ENCODE measurements at regions of chr20 and their contacts with region 1.

Region 1: GRCh38 chr20:54668271-54669039 is 193.1 kb downstream of the DOK5 start:
- DNase-seq: peak in 6 of 9 experiments; percentile 2 to 40 (median 16)
- ATAC-seq: no peak
- H3K4me3 ChIP-seq: no peak overlapping the region
- H3K4me3 Mint-ChIP-seq: no peak overlapping the region
- H3K27ac ChIP-seq: no peak overlapping the region
- H3K27ac Mint-ChIP-seq: no peak overlapping the region
- H3K4me1 ChIP-seq: no peaks in the 10 kb centered on the region
- H3K4me1 Mint-ChIP-seq: peaks cover 2% of the 10 kb centered on the region
- H3K27me3 ChIP-seq: no peaks in the 10 kb centered on the region
- H3K27me3 Mint-ChIP-seq: peaks cover 18% of the 10 kb centered on the region
- CTCF ChIP-seq: peak; percentile 47

Region 2: GRCh38 chr20:54619181-54619580 is 49.3 kb before region 1 on chr20:
- CTCF ChIA-PET with region 1: no interaction called
- POLR2A ChIA-PET with region 1: no interaction called
- intact Hi-C with region 1: no loop called
- DNase-seq: no peak
- ATAC-seq: no peak
- H3K4me3 ChIP-seq: no peak overlapping the region
- H3K4me3 Mint-ChIP-seq: no peak overlapping the region
- H3K27ac ChIP-seq: no peak overlapping the region
- H3K27ac Mint-ChIP-seq: no peak overlapping the region
- H3K4me1 ChIP-seq: no peaks in the 10 kb centered on the region
- H3K4me1 Mint-ChIP-seq: no peaks in the 10 kb centered on the region
- H3K27me3 ChIP-seq: no peaks in the 10 kb centered on the region
- H3K27me3 Mint-ChIP-seq: peaks cover 3% of the 10 kb centered on the region
- CTCF ChIP-seq: no peak

Region 3: GRCh38 chr20:55229451-55229850 is 561.0 kb after region 1 on chr20:
- CTCF ChIA-PET with region 1: no interaction called
- POLR2A ChIA-PET with region 1: no interaction called
- intact Hi-C with region 1: no loop called
- DNase-seq: no peak
- ATAC-seq: no peak
- H3K4me3 ChIP-seq: no peak overlapping the region
- H3K4me3 Mint-ChIP-seq: no peak overlapping the region
- H3K27ac ChIP-seq: no peak overlapping the region
- H3K27ac Mint-ChIP-seq: no peak overlapping the region
- H3K4me1 ChIP-seq: no peaks in the 10 kb centered on the region
- H3K4me1 Mint-ChIP-seq: no peaks in the 10 kb centered on the region
- H3K27me3 ChIP-seq: no peaks in the 10 kb centered on the region
- H3K27me3 Mint-ChIP-seq: no peaks in the 10 kb centered on the region
- CTCF ChIP-seq: no peak

Region 4: DNA sequence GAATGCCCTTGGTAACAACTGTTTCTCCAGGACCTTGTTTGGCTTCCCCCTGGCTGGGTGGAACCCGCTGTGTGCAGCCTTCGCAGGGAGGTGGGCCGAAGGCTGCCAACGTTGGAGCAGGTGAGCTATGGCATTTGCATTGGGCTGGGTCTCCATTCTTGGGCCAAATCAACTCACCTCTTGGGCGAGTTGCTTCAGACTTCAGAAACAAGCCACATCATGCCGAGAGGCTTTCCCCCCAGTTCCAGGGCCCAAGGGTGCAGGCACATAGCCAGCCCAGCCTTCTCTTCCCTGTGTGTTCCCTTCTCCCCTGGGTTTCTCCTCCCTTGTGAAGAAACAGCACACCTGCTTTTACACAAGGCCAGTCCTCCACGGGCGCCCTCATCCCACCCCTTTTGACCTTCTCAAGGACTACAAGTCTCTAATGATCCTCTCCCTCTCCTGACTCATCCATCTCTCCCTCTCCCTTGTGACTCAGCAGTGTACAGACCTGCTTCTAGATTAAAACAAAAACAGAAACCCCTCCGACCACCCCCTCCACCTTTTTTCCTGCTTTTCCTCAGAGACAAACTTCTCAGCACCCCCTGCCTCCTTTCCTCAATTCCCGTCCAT is 1906.2 kb after region 1 on chr20:
- CTCF ChIA-PET with region 1: no interaction called
- POLR2A ChIA-PET with region 1: no interaction called
- intact Hi-C with region 1: loop called in 1 of 2 experiments (anchors 10 kb)
- DNase-seq: no peak
- ATAC-seq: no peak
- H3K4me3 ChIP-seq: no peak overlapping the region
- H3K4me3 Mint-ChIP-seq: no peak overlapping the region
- H3K27ac ChIP-seq: no peak overlapping the region
- H3K27ac Mint-ChIP-seq: no peak overlapping the region
- H3K4me1 ChIP-seq: no peaks in the 10 kb centered on the region
- H3K4me1 Mint-ChIP-seq: no peaks in the 10 kb centered on the region
- H3K27me3 ChIP-seq: no peaks in the 10 kb centered on the region
- H3K27me3 Mint-ChIP-seq: peaks cover 24% of the 10 kb centered on the region
- CTCF ChIP-seq: no peak